ENCODE measurements at regions of chr5 and their contacts with region 1.

Region 1: GRCh38 chr5:13987843-13988464 is 43.5 kb upstream of the DNAH5 start:
- DNase-seq: peak; percentile 66
- CTCF ChIP-seq: peak; percentile 56

Region 2: DNA sequence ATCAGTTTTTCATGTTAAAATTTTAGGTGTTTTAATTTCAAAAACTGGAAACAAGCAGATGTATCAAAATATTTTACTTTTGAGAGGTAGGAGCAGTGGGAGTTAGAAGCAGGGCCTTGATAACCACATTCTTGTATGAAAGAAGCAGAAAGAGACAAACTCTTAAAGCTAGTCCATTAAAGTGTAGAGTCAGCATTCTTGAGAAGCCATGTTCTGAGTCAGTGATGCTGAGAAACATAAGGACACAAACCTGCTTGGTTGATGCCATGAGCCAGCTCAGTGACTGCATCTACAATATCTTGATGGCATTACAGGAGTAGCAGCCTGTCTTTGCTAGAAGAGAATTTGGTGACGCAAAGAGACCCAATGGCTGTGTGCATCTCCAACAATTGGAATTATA is 1257.6 kb before region 1 on chr5:
- in situ Hi-C with region 1: no loop called
- DNase-seq: no peak
- CTCF ChIP-seq: no peak

Region 3: GRCh38 chr5:13860146-13860545 is 127.8 kb before region 1 on chr5:
- in situ Hi-C with region 1: no loop called
- DNase-seq: no peak
- CTCF ChIP-seq: no peak

Region 4: DNA sequence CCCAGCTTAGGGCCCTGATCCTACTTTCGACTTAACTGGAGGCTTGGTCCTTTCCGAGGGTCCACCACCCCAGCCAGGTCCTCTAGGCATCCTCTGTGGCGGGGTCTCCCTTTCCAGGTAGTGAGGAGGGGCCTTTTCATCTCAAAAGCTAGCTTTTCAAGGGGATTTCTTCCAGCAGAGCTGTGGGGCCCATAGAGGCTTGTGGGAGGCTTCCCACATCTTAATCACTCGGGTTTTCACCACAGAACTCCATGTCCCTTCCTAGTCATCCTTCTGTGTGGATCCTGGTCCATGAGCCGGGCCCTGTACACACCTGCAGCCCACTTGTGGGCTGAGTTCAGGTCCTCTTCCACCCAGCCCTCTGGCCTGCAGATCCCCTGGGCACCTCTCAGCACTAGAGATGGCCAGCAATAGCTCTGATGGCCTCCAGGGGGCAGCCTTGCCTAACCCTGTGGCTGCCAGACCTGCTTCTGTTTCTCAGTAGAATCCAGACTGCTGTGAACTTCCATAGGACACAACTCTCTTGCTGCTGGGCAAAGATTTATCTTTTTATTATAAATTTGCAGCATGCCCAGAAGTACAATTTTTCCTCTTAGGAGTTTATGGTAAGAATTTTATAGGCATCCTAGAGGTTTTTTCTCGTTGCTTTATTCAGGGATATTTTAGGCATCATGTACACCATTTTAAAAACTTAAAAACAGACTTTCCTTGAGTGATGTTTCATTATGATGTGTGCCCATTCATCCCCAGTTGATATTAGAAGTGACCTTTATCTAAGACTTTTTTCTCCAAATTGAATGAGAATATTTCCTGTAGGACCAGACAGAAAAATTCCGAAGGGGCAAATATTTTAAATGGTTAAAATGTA is 364.1 kb after region 1 on chr5:
- in situ Hi-C with region 1: loop called (anchors 25 kb)
- DNase-seq: peak; percentile 80
- CTCF ChIP-seq: peak; percentile 96

Region 5: GRCh38 chr5:14644623-14645237 is 656.8 kb after region 1 on chr5:
- in situ Hi-C with region 1: loop called (anchors 10 kb)
- DNase-seq: no peak
- CTCF ChIP-seq: no peak